ENCODE measurements at regions of chr12 and their contacts with region 1.

Region 1: GRCh38 chr12:91361864-91362263 is 179.2 kb upstream of the DCN start:
- DNase-seq: no peak
- H3K4me3 Mint-ChIP-seq: no peak overlapping the region
- H3K27ac Mint-ChIP-seq: no peak overlapping the region
- H3K4me1 Mint-ChIP-seq: no peaks in the 10 kb centered on the region
- H3K27me3 Mint-ChIP-seq: peaks cover 3% of the 10 kb centered on the region

Region 2: GRCh38 chr12:91413581-91414546 is 52.0 kb after region 1 on chr12:
- CTCF ChIA-PET with region 1: no interaction called
- POLR2A ChIA-PET with region 1: no interaction called
- intact Hi-C with region 1: no loop called
- DNase-seq: no peak
- H3K4me3 Mint-ChIP-seq: no peak overlapping the region
- H3K27ac Mint-ChIP-seq: no peak overlapping the region
- H3K4me1 Mint-ChIP-seq: no peaks in the 10 kb centered on the region
- H3K27me3 Mint-ChIP-seq: peaks cover 4% of the 10 kb centered on the region

Region 3: GRCh38 chr12:92649511-92650227 is 1287.8 kb after region 1 on chr12:
- CTCF ChIA-PET with region 1: interaction called, 3 read pairs
- POLR2A ChIA-PET with region 1: no interaction called
- intact Hi-C with region 1: loop called (anchors 5 kb)
- DNase-seq: peak; percentile 65
- H3K4me3 Mint-ChIP-seq: no peak overlapping the region
- H3K27ac Mint-ChIP-seq: no peak overlapping the region
- H3K4me1 Mint-ChIP-seq: peaks cover 12% of the 10 kb centered on the region
- H3K27me3 Mint-ChIP-seq: no peaks in the 10 kb centered on the region

Measured in activated CD4-positive, alpha-beta memory T cell treated with anti-CD3 and anti-CD28 coated beads for 36 hours (primary cell).